Mammary epithelial cell (primary cell): ENCODE measurements at regions of chr22 and their contacts with region 1.

Region 1: DNA sequence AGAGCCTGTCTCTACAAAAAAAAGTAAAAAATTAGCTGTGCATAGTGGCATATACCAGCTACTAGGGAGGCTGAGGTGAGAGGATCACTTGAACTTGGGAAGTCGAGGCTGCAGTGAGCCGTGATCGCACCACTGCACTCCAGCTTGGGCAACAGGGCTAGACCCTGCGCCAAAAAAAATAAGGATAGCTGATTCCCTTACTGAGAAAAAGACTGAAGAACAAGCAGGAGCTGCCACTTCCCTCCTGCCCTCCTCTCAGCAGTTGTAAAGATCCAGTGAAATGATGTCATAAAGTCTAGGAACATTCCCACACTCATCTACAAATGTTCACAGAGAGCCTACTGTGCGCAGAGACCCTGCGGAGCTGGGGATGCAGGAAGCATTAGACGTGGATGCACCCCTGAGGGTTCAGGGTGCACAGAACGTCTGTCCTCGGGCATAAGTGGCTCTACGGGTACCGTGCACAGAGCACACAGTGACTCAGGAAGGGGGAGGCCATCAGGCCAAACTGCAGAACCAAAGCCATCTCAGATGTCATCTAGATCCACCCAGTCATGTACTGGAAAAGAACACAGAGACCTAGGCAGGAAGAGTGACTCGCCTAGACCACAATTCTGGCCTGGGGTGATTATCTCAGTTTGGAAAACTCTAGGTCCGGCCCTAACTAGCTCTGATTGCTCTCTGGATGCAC is 11.7 kb downstream of the SEC14L2 start:
- DNase-seq: peak; percentile 93
- H3K4me3 ChIP-seq: no peak overlapping the region
- H3K27ac ChIP-seq: peak overlapping the region; percentile 48
- H3K4me1 ChIP-seq: peaks cover 71% of the 10 kb centered on the region
- H3K27me3 ChIP-seq: no peaks in the 10 kb centered on the region
- CTCF ChIP-seq: no peak

Region 2: DNA sequence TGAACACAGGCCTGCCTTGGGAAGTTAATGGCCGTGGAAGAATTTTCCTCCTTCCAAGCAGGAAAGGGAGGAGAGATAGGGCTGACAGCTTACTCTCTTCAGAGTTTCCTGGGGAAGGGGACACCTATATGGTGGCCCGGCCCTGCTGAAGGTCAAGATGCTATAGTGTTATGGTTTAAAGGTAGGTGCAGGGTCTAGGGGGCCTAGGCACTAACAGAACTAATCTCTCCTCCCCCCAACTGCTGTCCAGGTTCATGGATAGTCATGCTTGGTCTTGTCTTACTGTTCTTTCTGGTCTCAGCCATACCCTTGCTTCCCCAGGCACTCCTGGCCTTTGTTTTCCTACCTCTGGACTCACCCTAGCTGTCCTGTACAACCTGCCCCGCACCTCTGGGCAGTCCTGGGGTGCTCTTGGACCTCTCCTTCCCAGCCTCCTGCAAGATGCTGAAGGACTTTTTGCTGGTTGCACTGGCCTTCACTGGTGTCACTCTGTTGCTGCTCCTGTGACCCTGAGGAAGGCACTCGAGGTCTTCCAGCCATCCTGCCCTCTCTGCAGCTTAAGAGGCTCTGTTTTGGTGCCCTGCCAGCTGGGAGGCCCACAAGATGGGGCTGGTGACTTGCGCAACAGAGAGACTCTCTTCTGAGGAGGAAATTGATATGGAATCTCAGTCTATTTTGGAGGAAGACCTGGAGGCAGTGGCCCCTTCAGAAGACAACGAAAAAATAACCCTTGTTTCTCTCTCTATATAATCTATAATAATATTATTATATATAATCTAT is 45.4 kb after region 1 on chr22:
- CTCF ChIA-PET with region 1: no interaction called
- dilution Hi-C with region 1: no loop called
- in situ Hi-C with region 1: no loop called
- intact Hi-C with region 1: no loop called
- DNase-seq: no peak
- H3K4me3 ChIP-seq: no peak overlapping the region
- H3K27ac ChIP-seq: no peak overlapping the region
- H3K4me1 ChIP-seq: no peaks in the 10 kb centered on the region
- H3K27me3 ChIP-seq: no peaks in the 10 kb centered on the region
- CTCF ChIP-seq: no peak

Region 3: DNA sequence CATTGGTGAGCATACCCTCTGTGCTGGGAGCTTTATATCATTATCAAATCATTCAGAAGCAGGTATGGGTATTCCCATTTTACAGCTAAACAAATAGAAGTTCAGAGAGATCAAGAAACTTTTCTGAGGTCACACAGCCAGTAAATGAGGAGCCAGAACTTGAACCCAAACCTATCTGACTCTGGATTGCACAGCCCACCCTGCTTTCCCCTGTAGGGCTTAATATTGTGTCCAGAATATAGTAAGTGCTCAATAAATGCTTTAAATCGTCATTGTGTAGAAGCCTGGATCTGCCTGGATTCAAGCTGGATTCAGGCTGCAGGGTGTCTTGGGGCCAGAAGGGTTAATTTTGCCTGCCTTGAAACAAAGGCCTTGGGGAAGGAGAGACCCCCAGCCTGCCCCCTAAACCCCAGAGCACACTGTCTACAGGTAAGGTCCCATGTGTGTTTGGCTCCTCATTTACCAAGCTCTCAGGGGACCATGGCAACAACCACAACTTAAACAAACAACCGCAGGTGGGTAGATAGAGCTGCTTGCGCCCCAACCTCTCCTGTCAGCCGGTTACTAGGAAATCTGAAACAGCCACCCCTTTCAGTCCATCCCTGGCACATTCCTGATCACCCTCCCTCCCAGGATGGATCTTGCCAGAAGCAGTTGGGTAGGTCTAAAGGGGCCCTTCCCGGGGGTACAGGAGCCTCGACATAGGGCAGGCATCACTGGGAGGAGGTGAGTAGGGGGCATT is 66.3 kb after region 1 on chr22:
- CTCF ChIA-PET with region 1: no interaction called
- dilution Hi-C with region 1: loop called (anchors 5 kb)
- in situ Hi-C with region 1: no loop called
- intact Hi-C with region 1: no loop called
- DNase-seq: peak; percentile 25
- H3K4me3 ChIP-seq: no peak overlapping the region
- H3K27ac ChIP-seq: no peak overlapping the region
- H3K4me1 ChIP-seq: peaks cover 8% of the 10 kb centered on the region
- H3K27me3 ChIP-seq: no peaks in the 10 kb centered on the region
- CTCF ChIP-seq: no peak